GM10248 (cell line): ENCODE measurements at regions of chr5 and their contacts with region 1.

Region 1: GRCh38 chr5:87400305-87400899 is 12.3 kb downstream of the CCNH start:
- DNase-seq: peak; percentile 34
- CTCF ChIP-seq: peak; percentile 44

Region 2: GRCh38 chr5:87069974-87070624 is 330.3 kb before region 1 on chr5:
- CTCF ChIA-PET with region 1: interaction called, 10 read pairs
- POLR2A ChIA-PET with region 1: no interaction called
- DNase-seq: peak; percentile 32
- CTCF ChIP-seq: peak; percentile 43

Region 3: DNA sequence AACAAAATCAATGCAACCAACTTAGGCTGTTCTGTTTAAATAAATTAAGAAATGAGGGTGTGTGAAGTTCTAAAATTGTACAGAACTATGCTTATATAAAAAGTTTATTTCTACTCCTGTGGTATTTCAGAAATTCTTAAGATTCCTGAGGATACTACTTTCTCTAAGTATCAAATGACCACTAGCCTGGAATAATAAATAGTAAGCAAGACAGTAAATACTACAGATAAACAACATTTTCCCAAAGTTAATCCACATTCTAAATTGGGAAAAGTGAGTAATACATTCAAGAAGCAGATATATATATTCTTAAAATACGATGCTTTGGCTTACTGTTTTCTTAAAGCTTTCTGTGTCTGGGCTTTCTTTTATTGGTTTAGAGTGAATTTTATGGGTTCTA is 17.2 kb before region 1 on chr5:
- CTCF ChIA-PET with region 1: interaction called, 30 read pairs
- POLR2A ChIA-PET with region 1: interaction called, 4 read pairs
- DNase-seq: no peak
- CTCF ChIP-seq: no peak

Region 4: GRCh38 chr5:87412630-87413342 is 12.4 kb after region 1 on chr5 and contains the start of gene CCNH:
- CTCF ChIA-PET with region 1: interaction called, 23 read pairs
- POLR2A ChIA-PET with region 1: interaction called, 4 read pairs
- DNase-seq: peak; percentile 93
- CTCF ChIP-seq: no peak

Region 5: DNA sequence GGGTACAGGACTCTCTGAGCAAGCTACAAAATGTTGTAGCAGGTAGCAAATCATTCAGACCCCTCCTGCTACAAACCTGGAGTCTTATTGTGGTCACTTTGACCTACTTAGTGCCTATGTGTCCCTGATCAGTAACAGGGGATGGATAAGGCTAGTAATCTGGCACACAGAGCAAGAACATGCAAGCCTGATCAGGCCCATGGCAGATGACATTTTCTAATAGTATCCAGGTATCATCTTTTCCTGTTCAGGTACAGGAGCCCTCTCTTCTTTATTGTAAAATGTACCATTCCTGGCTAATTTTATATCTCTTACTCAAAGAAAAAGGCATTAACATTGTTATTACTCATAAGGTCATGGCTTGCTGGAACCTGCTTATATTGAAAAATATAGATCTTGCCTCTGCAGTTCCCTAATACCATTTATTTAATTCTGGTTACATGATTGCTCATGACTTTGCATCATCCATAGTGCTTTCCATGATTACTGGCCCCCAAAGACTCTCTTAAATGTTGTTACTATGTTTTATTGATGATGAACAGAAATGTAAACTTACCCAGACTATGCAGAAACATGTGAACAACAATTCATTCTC is 30.6 kb after region 1 on chr5:
- CTCF ChIA-PET with region 1: no interaction called
- POLR2A ChIA-PET with region 1: no interaction called
- DNase-seq: no peak
- CTCF ChIP-seq: no peak

Region 6: GRCh38 chr5:87442419-87442818 is 42.0 kb after region 1 on chr5:
- CTCF ChIA-PET with region 1: no interaction called
- POLR2A ChIA-PET with region 1: no interaction called
- DNase-seq: no peak
- CTCF ChIP-seq: no peak

Region 7: DNA sequence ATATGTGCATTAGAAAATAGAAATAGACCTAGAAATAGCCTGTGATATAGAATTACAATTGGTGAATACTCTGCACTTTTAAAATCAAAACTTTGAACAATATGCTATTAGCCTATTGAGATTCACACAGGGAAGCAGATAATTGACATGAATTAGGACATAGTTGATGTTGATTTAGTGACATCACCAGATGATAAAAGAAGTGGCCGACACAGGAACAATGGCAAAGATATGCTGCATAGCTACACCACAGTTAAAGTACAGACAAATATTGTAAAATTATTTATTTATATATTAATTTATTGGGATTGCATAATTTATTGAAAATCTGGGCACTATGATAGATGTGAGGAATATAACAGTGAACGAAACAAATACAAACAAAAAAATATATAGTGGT is 273.8 kb after region 1 on chr5:
- CTCF ChIA-PET with region 1: no interaction called
- POLR2A ChIA-PET with region 1: no interaction called
- DNase-seq: no peak
- CTCF ChIP-seq: no peak

Region 8: DNA sequence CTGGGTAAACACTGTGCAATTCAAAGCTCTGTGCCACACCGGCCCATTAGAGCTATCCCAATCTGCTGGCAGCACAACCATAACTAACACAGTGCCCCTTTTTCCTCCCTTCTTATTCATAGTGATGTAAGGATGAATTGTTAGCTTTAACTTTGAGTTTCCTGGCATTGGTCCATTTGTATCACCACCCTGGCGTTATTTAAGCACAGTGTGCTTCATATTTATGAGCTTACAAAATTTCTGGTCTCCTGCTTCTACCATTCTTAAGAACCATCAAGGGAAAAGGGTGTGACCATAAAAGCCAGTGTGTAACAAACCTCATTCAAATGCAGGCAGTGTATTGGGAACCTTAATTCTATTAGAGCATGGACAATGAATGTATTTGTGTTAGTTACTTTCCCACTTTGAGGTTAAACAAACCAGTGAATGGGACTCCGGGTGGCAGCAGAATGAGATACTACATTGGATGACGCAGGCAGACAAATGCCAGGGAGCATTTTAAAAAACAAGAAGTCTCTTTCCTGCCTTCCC is 645.6 kb after region 1 on chr5:
- CTCF ChIA-PET with region 1: no interaction called
- POLR2A ChIA-PET with region 1: no interaction called
- DNase-seq: no peak
- CTCF ChIP-seq: no peak